Esophagus muscularis mucosa (tissue), 4 donors: ENCODE measurements at regions of chr4 and their contacts with region 1.

Region 1: DNA sequence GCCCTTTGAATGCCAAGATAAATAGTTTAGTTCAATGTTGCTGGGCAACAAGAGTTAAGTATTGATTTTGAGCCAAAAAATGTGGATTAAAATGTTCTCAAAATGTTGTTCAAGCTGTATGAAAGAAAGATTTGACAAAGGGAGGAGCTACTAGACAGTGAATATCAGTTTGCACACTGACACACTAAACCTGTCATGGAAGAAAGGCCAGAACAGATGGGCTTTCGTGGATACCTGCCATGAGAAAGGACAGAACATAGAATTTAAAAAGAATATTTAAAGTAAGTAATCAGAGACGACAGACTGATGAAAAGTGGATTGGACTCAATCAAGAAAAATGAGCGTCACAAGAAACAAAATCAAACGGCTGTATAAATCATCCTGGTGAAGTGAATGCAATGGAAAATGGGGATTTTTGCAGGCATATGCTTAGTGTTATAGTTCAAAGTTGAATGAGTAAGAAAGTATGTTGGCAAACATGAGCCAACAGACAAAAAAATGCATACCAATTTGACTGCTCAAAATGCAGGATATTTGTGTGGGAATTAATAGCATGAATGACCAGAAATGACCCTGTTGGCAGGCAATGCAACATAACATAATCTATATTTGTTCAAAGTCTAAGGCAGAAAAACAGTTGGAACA is 7.4 kb downstream of the PCDH18 start:
- DNase-seq: no peak
- H3K4me3 ChIP-seq: peak overlapping the region in 2 of 4 donors; percentile 5 to 12
- H3K27ac ChIP-seq: peak overlapping the region; percentile 40 to 86 (median 60)
- H3K4me1 ChIP-seq: peaks cover 10 to 60% (median 46%) of the 10 kb centered on the region in 4 donors
- H3K27me3 ChIP-seq: no peaks in the 10 kb centered on the region
- CTCF ChIP-seq: no peak
- EP300 ChIP-seq: no peak
- POLR2A ChIP-seq: no peak

Region 2: DNA sequence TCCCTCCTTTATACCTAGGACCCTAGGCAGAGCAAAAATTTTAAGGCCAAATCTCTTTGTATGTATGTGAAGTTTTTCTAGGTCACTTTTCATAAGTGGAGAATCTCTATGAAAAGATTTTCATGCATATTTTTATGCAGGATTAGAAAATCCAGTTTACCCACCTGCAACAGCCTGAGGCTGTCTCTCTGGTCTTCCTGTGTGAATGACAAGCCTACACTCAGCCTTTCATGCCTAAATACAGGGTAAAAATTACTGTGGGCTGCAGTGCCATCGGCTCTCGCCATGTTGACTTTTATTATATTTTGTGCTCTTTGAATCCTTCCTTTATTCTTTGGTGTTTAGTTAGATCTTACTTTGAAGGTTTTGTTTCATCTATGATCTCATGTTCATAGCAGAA is 224.6 kb before region 1 on chr4:
- intact Hi-C with region 1: no loop called
- DNase-seq: no peak
- H3K4me3 ChIP-seq: no peak overlapping the region
- H3K27ac ChIP-seq: no peak overlapping the region
- H3K4me1 ChIP-seq: no peaks in the 10 kb centered on the region
- H3K27me3 ChIP-seq: no peaks in the 10 kb centered on the region
- CTCF ChIP-seq: no peak
- EP300 ChIP-seq: no peak
- POLR2A ChIP-seq: no peak

Region 3: GRCh38 chr4:137359691-137360315 is 165.0 kb before region 1 on chr4:
- intact Hi-C with region 1: loop called (anchors 10 kb)
- DNase-seq: no peak
- H3K4me3 ChIP-seq: no peak overlapping the region
- H3K27ac ChIP-seq: peak overlapping the region in 1 of 4 donors; percentile 1
- H3K4me1 ChIP-seq: peaks cover 0 to 35% (median 26%) of the 10 kb centered on the region in 4 donors
- H3K27me3 ChIP-seq: no peaks in the 10 kb centered on the region
- CTCF ChIP-seq: no peak
- EP300 ChIP-seq: no peak
- POLR2A ChIP-seq: no peak

Region 4: DNA sequence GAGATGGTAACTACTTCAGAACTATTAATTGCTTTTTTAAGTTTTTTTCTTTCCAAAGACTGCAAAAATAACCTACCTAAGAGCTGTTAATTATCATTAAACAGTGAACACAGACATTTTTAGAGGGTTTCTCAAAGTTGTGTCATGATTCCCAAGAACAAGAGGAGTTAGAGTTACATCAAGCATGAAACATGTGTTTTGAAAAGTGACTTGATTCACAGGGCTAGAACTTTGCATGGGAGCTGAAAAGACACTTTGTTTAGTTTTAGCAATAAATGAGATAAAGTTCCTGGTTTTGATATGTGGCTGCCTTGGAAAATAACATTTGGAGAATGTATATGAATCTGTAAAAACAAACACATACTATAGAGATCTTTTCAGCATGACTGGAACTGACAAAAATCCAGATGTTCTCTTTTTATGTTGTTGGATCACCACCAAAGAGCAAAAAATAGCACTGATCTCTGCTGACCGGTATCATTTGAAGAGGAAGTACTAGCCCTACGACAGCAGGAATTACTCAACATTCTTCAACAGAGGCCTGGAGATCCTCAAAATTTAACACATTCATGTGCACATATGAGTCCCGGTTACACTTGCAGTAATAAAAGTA is 180.4 kb after region 1 on chr4:
- intact Hi-C with region 1: no loop called
- DNase-seq: no peak
- H3K4me3 ChIP-seq: no peak overlapping the region
- H3K27ac ChIP-seq: peak overlapping the region; percentile 62 to 77 (median 68)
- H3K4me1 ChIP-seq: peaks cover 5 to 63% (median 46%) of the 10 kb centered on the region in 4 donors
- H3K27me3 ChIP-seq: no peaks in the 10 kb centered on the region
- CTCF ChIP-seq: no peak
- EP300 ChIP-seq: no peak
- POLR2A ChIP-seq: no peak